Mammary epithelial cell (primary cell): ENCODE measurements at regions of chr2 and their contacts with region 1.

Region 1: DNA sequence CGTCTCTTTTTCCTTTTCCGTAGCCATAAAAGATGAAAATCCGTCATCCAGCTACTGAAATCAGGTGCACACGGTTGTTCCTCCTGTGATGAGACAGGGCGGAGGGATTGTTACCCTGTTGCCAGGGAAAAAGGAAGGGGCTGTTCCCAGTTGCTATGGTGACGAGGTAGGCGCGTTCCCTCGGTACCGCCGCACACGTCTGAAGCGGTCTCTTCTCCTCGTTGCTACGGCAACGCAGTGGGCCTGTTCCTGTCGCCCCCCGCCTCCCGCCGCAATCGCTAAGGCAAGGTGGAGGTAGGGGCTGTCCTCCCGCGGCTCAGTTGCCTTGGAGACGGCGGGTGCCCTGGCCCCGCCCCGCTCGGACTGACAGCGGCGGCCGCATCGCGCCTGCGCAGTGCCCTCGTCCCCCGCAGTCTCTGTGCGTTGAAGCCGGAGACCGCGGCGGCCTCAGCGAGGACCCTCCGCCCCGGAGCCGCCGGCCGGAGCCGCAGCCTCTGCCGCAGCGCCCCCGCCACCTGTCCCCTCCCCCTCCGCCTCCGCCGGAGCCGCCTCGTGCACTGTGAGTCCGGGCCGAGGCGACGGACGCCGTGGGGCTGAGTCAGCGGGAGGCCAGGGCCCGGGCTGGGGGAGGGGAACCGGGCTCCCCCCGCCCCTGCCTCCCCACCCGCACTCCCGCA is at the start of gene MAPRE3:
- DNase-seq: peak; percentile 81
- H3K4me3 ChIP-seq: peak within 1 kb of the TSS; percentile 61 to 94 (median 93)
- H3K27ac ChIP-seq: peak within 1 kb of the TSS; percentile 83
- H3K4me1 ChIP-seq: peaks cover 13% of the 10 kb centered on the region
- H3K27me3 ChIP-seq: no peaks in the 10 kb centered on the region
- CTCF ChIP-seq: no peak
- total RNA-seq, gene MAPRE3: 10.2 to 25.0 TPM

Region 2: DNA sequence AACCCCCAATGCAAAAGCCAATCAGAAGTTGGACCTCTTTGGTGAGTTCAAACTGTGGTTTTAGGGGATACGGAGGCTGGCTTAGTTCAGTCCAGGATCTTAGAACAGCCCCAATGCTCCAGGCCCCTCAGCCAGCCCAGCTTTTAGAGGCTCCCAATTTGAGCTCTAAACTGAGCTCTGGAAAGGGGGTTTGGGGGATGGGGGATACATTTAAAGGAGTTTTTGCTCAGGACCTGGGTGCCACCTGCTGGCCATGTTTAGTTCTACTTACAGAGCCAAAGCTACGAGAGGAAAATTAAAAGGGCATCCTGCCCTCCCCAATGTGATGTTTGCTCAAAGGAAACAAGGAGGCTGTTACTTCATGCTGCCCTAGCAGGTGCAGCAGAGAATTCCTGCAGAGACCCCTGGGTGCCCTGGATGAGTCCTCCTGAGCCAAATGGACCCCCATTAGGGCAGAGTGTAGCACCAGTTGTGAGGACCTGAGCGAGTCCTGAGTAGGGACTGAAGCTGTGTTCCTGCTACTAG is 46.5 kb after region 1 on chr2:
- CTCF ChIA-PET with region 1: no interaction called
- dilution Hi-C with region 1: no loop called
- in situ Hi-C with region 1: loop called in 1 of 2 experiments (anchors 5 kb)
- intact Hi-C with region 1: loop called (anchors 2 kb)
- DNase-seq: peak; percentile 25
- H3K4me3 ChIP-seq: no peak overlapping the region
- H3K27ac ChIP-seq: no peak overlapping the region
- H3K4me1 ChIP-seq: peaks cover 20% of the 10 kb centered on the region
- H3K27me3 ChIP-seq: no peaks in the 10 kb centered on the region
- CTCF ChIP-seq: peak; percentile 63 to 71

Region 3: DNA sequence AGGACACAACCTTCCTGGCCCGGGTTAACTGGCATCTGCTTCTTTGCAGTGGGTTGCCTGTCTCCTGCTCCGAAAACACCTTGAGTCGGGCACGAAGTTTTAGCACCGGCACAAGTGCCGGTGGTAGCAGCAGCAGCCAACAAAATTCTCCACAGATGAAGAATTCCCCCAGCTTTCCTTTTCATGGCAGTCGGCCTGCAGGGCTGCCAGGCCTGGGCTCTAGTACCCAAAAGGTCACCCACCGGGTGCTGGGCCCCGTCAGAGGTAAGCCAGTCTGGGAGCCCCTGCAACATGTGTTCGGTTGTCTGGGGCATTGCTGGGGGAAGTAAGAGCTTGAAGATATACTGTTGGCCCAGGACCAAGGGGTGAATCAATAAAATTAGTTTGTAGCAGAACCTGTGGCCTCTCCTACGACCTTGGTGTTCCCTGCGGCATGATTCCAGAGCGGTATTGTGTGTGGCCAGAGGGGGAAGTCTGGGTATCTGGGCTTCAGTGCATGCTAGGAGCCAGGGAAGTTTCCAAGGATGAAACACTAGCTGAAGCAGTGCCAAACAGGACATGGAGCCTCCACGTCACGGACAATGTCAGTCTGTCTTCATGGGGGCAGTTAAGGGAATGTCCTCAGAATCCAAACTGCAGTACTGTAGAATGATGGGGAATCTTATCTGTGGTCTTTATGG is 88.9 kb after region 1 on chr2:
- CTCF ChIA-PET with region 1: no interaction called
- dilution Hi-C with region 1: loop called (anchors 5 kb)
- in situ Hi-C with region 1: no loop called
- intact Hi-C with region 1: no loop called
- DNase-seq: no peak
- H3K4me3 ChIP-seq: no peak overlapping the region
- H3K27ac ChIP-seq: no peak overlapping the region
- H3K4me1 ChIP-seq: no peaks in the 10 kb centered on the region
- H3K27me3 ChIP-seq: no peaks in the 10 kb centered on the region
- CTCF ChIP-seq: no peak

Region 4: DNA sequence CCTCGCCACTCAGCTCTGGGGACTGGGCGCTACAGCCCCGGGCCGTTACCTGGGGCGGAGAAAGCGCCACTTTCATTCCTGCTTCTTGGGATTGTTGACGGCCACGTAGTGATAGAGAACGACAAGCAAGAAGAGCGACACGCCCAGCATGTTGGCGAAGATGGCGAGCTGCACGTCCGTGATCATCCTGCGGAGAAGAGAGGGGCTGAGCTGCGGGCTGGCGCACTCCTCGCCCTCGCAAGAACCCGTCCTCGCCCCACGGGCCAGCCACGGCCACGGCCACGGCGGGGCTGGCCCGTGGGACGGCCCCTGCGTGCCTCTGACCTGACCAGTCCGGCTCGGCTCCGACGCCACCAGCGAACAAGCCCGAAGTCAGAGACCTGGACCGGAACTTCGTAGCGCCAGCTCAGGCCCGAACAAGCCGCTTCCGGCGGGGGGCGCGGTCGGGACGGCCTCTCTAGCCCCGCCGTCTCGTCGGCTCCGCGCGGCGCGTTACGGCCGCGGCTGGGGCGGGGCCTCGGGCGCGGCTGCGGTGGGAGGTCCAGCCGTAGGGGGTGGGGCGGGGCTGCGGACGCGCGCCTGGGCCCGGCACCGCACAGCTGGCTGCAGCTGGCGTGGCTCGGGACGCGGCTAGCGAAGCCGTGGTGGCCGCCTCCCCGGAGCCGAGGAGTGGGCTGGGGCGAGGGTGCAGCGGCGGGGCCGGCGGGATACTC is 101.1 kb after region 1 on chr2 and contains the start of gene OST4:
- CTCF ChIA-PET with region 1: no interaction called
- dilution Hi-C with region 1: no loop called
- in situ Hi-C with region 1: no loop called
- intact Hi-C with region 1: loop called (anchors 5 kb)
- DNase-seq: peak; percentile 90
- H3K4me3 ChIP-seq: peak within 1 kb of the TSS; percentile 79 to 98 (median 91)
- H3K27ac ChIP-seq: peak within 1 kb of the TSS; percentile 76
- H3K4me1 ChIP-seq: peaks cover 16% of the 10 kb centered on the region
- H3K27me3 ChIP-seq: no peaks in the 10 kb centered on the region
- CTCF ChIP-seq: no peak
- total RNA-seq, gene OST4: 121 to 313 TPM

Region 5: GRCh38 chr2:27115485-27115884 is 145.1 kb after region 1 on chr2:
- CTCF ChIA-PET with region 1: no interaction called
- dilution Hi-C with region 1: no loop called
- in situ Hi-C with region 1: no loop called
- intact Hi-C with region 1: no loop called
- DNase-seq: no peak
- H3K4me3 ChIP-seq: no peak overlapping the region
- H3K27ac ChIP-seq: no peak overlapping the region
- H3K4me1 ChIP-seq: peaks cover 10% of the 10 kb centered on the region
- H3K27me3 ChIP-seq: peaks cover 7% of the 10 kb centered on the region
- CTCF ChIP-seq: no peak

Region 6: DNA sequence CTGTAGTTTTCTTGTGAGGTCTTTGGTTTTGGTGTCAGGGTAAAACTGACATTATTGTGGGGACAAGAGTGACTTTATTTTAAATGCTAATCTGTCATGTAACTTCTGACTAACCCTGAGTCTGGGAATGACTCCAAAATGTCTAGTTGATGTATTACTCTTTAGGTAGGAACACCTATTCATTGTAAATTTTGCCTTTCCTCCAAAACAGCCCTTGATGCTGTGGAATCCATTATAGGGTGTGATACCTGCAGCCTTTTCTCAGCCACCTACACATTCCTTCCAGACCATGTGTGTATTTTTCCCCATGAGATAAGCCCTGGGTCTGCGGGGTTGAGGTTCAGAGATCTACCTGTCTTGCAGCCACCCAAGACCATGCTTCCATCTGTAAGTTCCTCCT is 172.9 kb after region 1 on chr2:
- CTCF ChIA-PET with region 1: no interaction called
- dilution Hi-C with region 1: no loop called
- in situ Hi-C with region 1: no loop called
- intact Hi-C with region 1: no loop called
- DNase-seq: no peak
- H3K4me3 ChIP-seq: no peak overlapping the region
- H3K27ac ChIP-seq: no peak overlapping the region
- H3K4me1 ChIP-seq: no peaks in the 10 kb centered on the region
- H3K27me3 ChIP-seq: no peaks in the 10 kb centered on the region
- CTCF ChIP-seq: no peak

Region 7: DNA sequence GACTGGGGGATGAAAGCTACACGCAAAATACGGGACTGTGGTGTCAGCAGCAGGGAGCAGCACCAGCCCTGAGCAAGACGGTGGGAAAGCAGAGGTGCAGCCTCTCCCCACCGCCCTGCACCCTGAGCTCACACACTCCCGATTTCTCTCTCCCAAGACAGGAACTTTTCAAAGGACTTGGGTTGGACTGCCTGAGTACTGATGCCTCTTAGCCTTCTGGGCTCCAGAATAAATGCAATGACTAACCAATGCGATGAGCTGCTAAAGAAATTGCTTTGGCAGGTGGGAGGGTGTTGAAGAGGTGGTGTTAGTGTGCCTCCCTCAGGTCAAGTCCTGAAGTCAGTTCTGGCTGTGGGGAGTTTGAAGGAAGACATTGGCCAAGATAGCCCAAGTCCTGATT is 321.5 kb after region 1 on chr2:
- CTCF ChIA-PET with region 1: no interaction called
- dilution Hi-C with region 1: no loop called
- in situ Hi-C with region 1: loop called in 1 of 2 experiments (anchors 25 kb)
- intact Hi-C with region 1: no loop called
- DNase-seq: peak; percentile 10
- H3K4me3 ChIP-seq: no peak overlapping the region
- H3K27ac ChIP-seq: no peak overlapping the region
- H3K4me1 ChIP-seq: peaks cover 13% of the 10 kb centered on the region
- H3K27me3 ChIP-seq: no peaks in the 10 kb centered on the region
- CTCF ChIP-seq: no peak